GM12878 (cell line): ENCODE measurements at regions of chr4 and their contacts with region 1.

Region 1: GRCh38 chr4:139645458-139645857 is 20.2 kb upstream of the MGST2 start:
- DNase-seq: no peak
- ATAC-seq: no peak
- H3K4me3 ChIP-seq: no peak overlapping the region
- H3K27ac ChIP-seq: no peak overlapping the region
- H3K4me1 ChIP-seq: no peaks in the 10 kb centered on the region
- H3K27me3 ChIP-seq: no peaks in the 10 kb centered on the region
- CTCF ChIP-seq: no peak
- EP300 ChIP-seq: no peak
- POLR2A ChIP-seq: no peak
- RAD21 ChIP-seq: no peak

Region 2: GRCh38 chr4:139711461-139711860 is 66.0 kb after region 1 on chr4:
- CTCF ChIA-PET with region 1: no interaction called
- POLR2A ChIA-PET with region 1: no interaction called
- RAD21 ChIA-PET with region 1: no interaction called
- SMC1A ChIA-PET with region 1: no interaction called
- in situ Hi-C with region 1: no loop called
- intact Hi-C with region 1: no loop called
- DNase-seq: no peak
- ATAC-seq: no peak
- H3K4me3 ChIP-seq: no peak overlapping the region
- H3K27ac ChIP-seq: no peak overlapping the region
- H3K4me1 ChIP-seq: no peaks in the 10 kb centered on the region
- H3K27me3 ChIP-seq: no peaks in the 10 kb centered on the region
- CTCF ChIP-seq: no peak
- EP300 ChIP-seq: no peak
- POLR2A ChIP-seq: no peak
- RAD21 ChIP-seq: no peak

Region 3: GRCh38 chr4:139749835-139750498 is 104.5 kb after region 1 on chr4:
- CTCF ChIA-PET with region 1: no interaction called
- POLR2A ChIA-PET with region 1: interaction called, 10 read pairs
- RAD21 ChIA-PET with region 1: no interaction called
- SMC1A ChIA-PET with region 1: no interaction called
- in situ Hi-C with region 1: no loop called
- intact Hi-C with region 1: no loop called
- DNase-seq: no peak
- ATAC-seq: no peak
- H3K4me3 ChIP-seq: no peak overlapping the region
- H3K27ac ChIP-seq: no peak overlapping the region
- H3K4me1 ChIP-seq: no peaks in the 10 kb centered on the region
- H3K27me3 ChIP-seq: no peaks in the 10 kb centered on the region
- CTCF ChIP-seq: no peak
- EP300 ChIP-seq: no peak
- POLR2A ChIP-seq: no peak
- RAD21 ChIP-seq: no peak

Region 4: DNA sequence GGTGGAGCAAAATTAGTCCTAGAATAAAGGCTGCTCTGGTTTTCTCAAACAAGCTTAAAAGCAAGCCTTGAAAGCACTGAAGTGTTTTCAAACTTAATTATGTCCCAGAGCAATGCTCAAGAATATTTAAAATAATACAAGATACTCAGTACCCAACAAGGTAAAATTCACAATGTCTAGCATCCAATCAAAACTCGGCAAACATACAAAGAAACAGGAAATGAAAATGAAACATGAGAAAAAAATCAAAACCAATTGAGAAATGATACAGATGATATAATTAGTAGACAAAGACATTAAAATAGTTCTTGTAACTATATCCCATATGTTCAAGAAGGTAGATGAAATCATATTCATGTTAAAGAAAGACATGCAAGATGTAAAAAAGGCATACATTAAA is 553.5 kb after region 1 on chr4:
- CTCF ChIA-PET with region 1: no interaction called
- POLR2A ChIA-PET with region 1: no interaction called
- RAD21 ChIA-PET with region 1: no interaction called
- SMC1A ChIA-PET with region 1: no interaction called
- in situ Hi-C with region 1: no loop called
- intact Hi-C with region 1: no loop called
- DNase-seq: no peak
- ATAC-seq: no peak
- H3K4me3 ChIP-seq: no peak overlapping the region
- H3K27ac ChIP-seq: no peak overlapping the region
- H3K4me1 ChIP-seq: no peaks in the 10 kb centered on the region
- H3K27me3 ChIP-seq: peaks cover 0 to 1% of the 10 kb centered on the region in 2 experiments; a peak in 3 of 4 replicates
- CTCF ChIP-seq: no peak
- EP300 ChIP-seq: no peak
- POLR2A ChIP-seq: no peak
- RAD21 ChIP-seq: no peak